ENCODE measurements at regions of chr9 and their contacts with region 1.

Region 1: DNA sequence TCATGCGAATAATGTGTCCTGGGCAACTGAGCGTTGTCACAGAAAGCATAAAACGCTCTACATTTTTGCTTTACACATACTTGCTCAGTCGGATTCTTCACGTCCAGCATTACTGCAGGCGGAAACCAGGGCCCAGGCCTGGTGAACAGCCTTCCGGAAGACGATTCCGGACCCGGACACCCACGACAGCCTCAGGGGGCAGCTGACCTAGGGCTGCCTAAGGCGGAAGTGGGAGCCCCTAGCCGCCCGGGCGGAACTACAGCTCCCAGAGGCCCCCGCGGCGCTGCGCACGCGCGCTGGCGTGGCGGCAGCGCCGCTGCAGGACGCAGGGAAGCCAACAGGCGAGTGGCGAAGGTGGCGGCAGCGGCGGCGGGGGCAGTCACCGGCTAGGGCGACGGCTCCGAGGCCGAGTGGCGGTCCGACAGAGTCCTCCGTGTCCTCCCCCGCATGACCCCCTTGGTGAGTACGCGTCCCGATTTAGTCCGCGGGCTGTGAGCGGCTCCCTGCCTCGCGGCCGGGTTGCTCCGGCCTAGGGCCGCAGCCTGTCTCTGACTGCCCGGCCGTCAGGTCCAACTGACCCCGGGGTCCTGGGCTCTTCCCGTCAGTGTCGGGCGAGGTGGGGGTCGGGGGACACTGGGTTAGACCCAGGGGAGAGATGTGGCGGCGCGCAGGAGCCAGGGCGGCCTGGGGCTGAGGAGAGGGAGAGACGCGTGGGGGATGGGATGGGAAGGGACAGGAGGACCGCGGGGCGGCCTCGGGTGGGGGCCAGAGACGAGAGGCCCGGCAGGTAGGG is at the start of gene GAPVD1:
- DNase-seq: peak; percentile 72 to 94 (median 86)
- ATAC-seq: peak; percentile 92
- H3K4me3 ChIP-seq: peak within 1 kb of the TSS; percentile 90 to 99
- H3K4me3 Mint-ChIP-seq: peak within 1 kb of the TSS; percentile 98
- H3K27ac ChIP-seq: peak within 1 kb of the TSS; percentile 67 to 78
- H3K27ac Mint-ChIP-seq: peak within 1 kb of the TSS; percentile 94
- H3K4me1 ChIP-seq: peaks cover 29% of the 10 kb centered on the region
- H3K4me1 Mint-ChIP-seq: peaks cover 49% of the 10 kb centered on the region
- H3K27me3 ChIP-seq: no peaks in the 10 kb centered on the region
- H3K27me3 Mint-ChIP-seq: peaks cover 2% of the 10 kb centered on the region
- CTCF ChIP-seq: peak; percentile 54
- total RNA-seq, gene GAPVD1: 81.0 to 84.1 TPM

Region 2: DNA sequence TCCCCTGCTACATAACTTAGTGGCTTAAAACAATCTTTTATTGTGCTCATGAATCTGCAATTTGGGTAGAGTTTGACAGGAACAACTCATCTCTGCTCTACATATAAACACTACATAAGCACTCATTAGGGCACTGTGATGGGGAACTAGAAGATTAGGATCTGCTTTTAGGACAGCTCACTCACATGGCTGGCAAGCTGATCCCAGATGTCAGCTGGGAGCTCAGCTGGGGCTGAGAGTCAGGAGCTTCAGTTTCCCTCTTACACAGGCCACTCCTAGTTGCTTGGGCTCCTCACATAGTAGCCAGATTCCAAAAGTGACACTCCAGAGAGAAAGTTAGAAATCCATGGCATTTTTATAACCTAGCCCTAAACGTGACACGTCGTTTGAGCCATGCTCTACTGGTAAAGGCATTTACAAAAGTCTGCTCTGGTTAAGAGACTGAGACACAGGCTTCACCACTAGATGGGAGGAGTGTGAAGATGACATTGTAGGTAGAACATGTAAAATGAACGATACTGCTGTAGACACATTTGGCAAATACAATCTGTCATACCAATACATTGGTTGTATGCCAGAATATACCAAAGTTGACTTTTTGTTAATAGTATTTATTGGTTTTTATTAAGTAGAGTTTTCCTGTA is 141.9 kb before region 1 on chr9:
- CTCF ChIA-PET with region 1: no interaction called
- POLR2A ChIA-PET with region 1: no interaction called
- intact Hi-C with region 1: loop called in 1 of 2 experiments (anchors 5 kb)
- DNase-seq: peak in 3 of 9 experiments; percentile 29 to 64 (median 44)
- ATAC-seq: peak; percentile 87
- H3K4me3 ChIP-seq: no peak overlapping the region
- H3K4me3 Mint-ChIP-seq: no peak overlapping the region
- H3K27ac ChIP-seq: no peak overlapping the region
- H3K27ac Mint-ChIP-seq: no peak overlapping the region
- H3K4me1 ChIP-seq: peaks cover 15% of the 10 kb centered on the region
- H3K4me1 Mint-ChIP-seq: peaks cover 40% of the 10 kb centered on the region
- H3K27me3 ChIP-seq: no peaks in the 10 kb centered on the region
- H3K27me3 Mint-ChIP-seq: no peaks in the 10 kb centered on the region
- CTCF ChIP-seq: peak; percentile 48

Region 3: DNA sequence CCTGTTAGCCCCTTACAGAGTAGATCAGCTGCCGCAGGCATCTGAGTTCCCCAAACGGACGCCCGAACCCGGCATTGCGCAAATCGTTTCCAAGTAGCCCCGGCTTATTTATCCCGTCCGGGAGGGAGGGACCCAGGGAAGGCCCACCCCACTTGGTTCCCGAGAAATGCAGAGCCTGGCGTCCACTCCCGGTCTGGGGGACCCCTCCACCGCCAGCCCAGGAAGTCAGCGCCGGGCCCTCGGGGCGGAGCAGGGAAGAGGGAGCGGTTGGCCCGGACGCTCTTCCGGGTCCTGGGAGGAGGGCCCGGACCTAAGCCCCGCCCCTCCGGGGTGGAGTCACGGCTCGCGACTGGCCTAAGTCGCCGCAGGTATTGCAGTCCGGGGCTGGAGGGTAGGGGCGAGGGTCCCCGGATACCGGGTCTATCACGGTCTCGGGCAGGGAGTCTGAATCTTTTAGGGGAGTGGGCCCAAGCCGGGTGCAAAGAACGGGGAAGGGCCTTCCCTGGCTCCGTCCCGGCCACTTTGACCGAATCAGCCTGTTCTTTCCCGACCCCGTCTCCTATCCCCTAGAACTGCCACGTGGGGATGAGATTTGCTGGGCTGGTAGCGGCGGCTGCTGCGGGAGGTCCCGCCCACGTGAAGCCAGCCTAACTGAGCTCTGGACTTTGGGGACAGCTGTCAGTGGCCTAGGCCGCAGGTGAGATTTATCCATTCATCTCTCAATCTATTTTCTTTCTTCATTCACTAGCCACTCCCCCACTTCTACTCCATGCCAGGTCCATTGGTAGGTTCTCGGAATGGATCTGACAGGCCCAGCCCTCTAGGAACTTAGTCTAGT is 61.3 kb before region 1 on chr9 and contains the start of gene RABEPK:
- CTCF ChIA-PET with region 1: interaction called, 3 read pairs
- POLR2A ChIA-PET with region 1: no interaction called
- intact Hi-C with region 1: loop called in 1 of 2 experiments (anchors 1 kb)
- DNase-seq: peak; percentile 74 to 94 (median 89)
- ATAC-seq: peak; percentile 97
- H3K4me3 ChIP-seq: peak within 1 kb of the TSS; percentile 77 to 100
- H3K4me3 Mint-ChIP-seq: peak within 1 kb of the TSS; percentile 91
- H3K27ac ChIP-seq: peak within 1 kb of the TSS; percentile 85 to 88
- H3K27ac Mint-ChIP-seq: peak within 1 kb of the TSS; percentile 90
- H3K4me1 ChIP-seq: peaks cover 41% of the 10 kb centered on the region
- H3K4me1 Mint-ChIP-seq: peaks cover 51% of the 10 kb centered on the region
- H3K27me3 ChIP-seq: no peaks in the 10 kb centered on the region
- H3K27me3 Mint-ChIP-seq: no peaks in the 10 kb centered on the region
- CTCF ChIP-seq: no peak
- total RNA-seq, gene RABEPK: 6.2 to 6.9 TPM

Region 4: DNA sequence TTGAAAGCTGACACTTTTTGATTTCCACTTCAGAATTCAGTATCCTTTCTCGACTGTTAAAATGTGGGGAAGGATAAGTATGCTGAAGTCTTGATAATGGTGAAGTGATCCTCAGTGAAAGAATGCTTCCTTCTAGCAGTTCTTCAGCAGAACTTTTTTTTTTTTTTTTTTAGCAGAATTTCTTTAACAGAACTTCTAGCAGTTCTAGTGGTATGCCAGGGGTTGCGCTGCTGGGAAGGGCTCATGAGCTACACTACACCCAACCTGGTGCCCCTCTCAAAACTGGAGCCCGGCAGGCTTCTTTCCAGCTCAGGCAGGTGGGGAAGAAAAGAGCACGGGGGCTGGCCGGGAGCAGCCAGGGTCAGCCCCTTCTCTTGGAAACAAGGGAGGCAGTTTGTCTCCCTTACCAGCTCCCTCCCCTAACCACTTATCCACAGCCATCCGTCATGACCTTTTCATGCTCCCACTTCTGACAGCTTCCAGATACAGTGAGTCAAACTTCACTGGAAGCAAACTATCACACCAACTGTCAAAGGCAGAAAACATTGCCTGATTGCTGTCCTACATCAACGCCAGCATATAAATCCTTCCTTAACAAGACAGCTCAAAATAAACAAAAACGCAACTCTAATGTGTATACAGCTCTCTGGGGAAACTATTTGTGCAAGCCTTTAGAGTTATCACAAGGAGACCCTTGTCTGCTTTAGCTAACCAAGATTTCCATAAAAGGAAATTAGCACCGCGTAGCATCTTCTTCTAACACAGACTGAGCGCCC is 211.4 kb after region 1 on chr9:
- CTCF ChIA-PET with region 1: no interaction called
- POLR2A ChIA-PET with region 1: no interaction called
- intact Hi-C with region 1: no loop called
- DNase-seq: no peak
- ATAC-seq: no peak
- H3K4me3 ChIP-seq: no peak overlapping the region
- H3K4me3 Mint-ChIP-seq: no peak overlapping the region
- H3K27ac ChIP-seq: no peak overlapping the region
- H3K27ac Mint-ChIP-seq: no peak overlapping the region
- H3K4me1 ChIP-seq: no peaks in the 10 kb centered on the region
- H3K4me1 Mint-ChIP-seq: no peaks in the 10 kb centered on the region
- H3K27me3 ChIP-seq: no peaks in the 10 kb centered on the region
- H3K27me3 Mint-ChIP-seq: no peaks in the 10 kb centered on the region
- CTCF ChIP-seq: no peak

Region 5: DNA sequence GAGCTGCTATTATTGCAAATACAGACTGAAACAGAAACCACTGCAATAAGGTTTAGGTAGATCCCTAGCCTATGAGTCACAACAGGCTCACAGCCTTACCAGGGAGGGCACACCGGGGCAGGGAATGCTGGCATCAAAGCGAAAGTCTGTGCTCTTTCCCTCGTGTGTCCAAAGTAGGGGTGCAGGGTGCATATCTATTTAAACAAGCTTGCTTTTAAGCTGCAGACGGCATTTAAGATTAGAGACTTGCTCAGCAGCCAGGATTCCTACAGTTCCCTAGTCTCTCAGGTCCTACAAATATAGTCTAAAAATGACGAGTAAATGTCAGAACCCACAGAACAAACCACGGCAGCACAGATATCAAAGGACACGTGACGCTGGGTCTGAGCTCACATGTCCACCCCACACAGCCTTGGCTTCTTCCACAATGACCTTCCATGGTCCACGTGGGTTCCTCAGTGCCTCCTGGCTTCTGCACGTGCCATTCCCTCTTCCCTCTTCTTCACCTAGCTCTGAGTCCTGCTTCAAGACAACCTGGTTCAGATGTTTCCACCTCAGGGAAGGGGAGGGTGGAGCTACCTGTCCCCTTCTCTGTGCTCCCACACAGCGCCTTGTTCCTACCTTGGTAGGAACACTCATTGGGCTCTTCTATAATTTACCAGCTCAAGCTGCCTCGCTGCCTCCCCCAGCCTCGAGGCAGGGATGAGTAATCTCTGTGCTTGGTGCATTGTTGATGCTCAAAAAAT is 252.1 kb after region 1 on chr9:
- CTCF ChIA-PET with region 1: no interaction called
- POLR2A ChIA-PET with region 1: no interaction called
- intact Hi-C with region 1: no loop called
- DNase-seq: peak in 1 of 9 experiments; percentile 22
- ATAC-seq: peak; percentile 31
- H3K4me3 ChIP-seq: no peak overlapping the region
- H3K4me3 Mint-ChIP-seq: no peak overlapping the region
- H3K27ac ChIP-seq: no peak overlapping the region
- H3K27ac Mint-ChIP-seq: no peak overlapping the region
- H3K4me1 ChIP-seq: no peaks in the 10 kb centered on the region
- H3K4me1 Mint-ChIP-seq: peaks cover 8% of the 10 kb centered on the region
- H3K27me3 ChIP-seq: no peaks in the 10 kb centered on the region
- H3K27me3 Mint-ChIP-seq: no peaks in the 10 kb centered on the region
- CTCF ChIP-seq: no peak